ENCODE measurements at regions of chr16 and their contacts with region 1.

Region 1: DNA sequence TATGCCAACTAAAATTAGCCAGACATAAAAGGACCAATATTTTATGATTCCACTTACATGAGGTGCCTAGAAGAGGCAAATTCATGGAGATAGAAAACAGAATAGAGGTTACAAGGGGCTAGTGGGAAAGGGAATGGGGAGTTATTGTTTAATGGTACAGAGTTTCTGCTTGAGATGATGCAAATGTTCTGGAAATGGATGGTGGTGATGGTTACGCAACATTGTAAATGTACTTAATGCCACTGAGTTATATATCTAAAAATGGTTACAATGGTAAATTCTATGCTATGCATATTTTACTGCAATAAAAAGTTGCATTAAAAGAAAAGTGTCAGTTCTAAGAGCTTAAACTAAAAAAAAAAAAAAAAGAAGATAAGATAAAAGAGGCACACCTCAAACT is 17.9 kb downstream of the MT1X start:
- DNase-seq: no peak
- H3K4me3 ChIP-seq: no peak overlapping the region
- H3K27ac ChIP-seq: no peak overlapping the region
- H3K4me1 ChIP-seq: no peaks in the 10 kb centered on the region
- H3K27me3 ChIP-seq: no peaks in the 10 kb centered on the region

Region 2: DNA sequence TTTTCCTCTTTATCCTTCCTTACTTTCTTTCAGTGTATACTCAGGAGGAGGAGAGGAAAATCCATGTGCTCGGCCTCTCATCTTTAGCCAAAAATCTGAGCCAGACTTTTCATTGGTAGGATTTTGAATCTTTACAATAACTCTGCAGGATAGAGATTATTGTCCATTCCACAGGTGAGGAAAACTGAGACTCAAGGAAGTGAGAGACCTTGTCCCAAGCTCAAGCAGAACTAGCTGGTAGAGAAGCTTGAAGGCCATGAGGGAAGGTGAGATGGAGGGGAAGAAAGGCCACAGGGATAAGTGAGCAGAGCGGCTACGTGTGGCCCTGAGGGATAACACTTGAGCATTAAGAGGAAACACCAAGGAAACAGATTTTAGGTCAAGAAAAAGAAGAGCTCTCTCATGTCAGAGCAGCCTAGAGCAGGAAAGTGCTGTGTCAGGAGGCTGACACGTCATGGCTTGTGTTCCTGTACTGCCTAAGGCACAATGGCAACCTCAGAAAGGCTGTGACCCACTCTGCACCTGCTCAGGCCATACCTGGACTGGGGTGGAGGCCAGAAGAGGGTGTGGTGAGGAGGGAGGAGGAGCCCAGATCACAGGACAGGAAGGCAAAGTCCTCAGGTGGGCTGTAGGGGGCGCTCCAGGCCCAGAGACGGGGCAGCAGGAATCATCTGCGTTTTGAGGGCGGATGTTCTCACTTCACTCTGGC is 123.5 kb before region 1 on chr16:
- CTCF ChIA-PET with region 1: interaction called, 36 read pairs
- POLR2A ChIA-PET with region 1: no interaction called
- DNase-seq: peak; percentile 74 to 83 (median 81)
- H3K4me3 ChIP-seq: no peak overlapping the region
- H3K27ac ChIP-seq: no peak overlapping the region
- H3K4me1 ChIP-seq: peaks cover 0 to 3% (median 1%) of the 10 kb centered on the region in 4 experiments
- H3K27me3 ChIP-seq: peaks cover 0 to 2% (median 0%) of the 10 kb centered on the region in 5 experiments

Region 3: GRCh38 chr16:56600398-56600999 is 99.7 kb before region 1 on chr16:
- CTCF ChIA-PET with region 1: interaction called, 41 read pairs
- POLR2A ChIA-PET with region 1: interaction called, 5 read pairs
- DNase-seq: peak; percentile 57 to 80 (median 70)
- H3K4me3 ChIP-seq: no peak overlapping the region
- H3K27ac ChIP-seq: no peak overlapping the region
- H3K4me1 ChIP-seq: no peaks in the 10 kb centered on the region
- H3K27me3 ChIP-seq: peaks cover 0 to 13% (median 6%) of the 10 kb centered on the region in 5 experiments

Region 4: GRCh38 chr16:56673921-56674320 is 26.3 kb before region 1 on chr16:
- CTCF ChIA-PET with region 1: interaction called, 42 read pairs
- POLR2A ChIA-PET with region 1: no interaction called
- DNase-seq: peak; percentile 50 to 73 (median 71)
- H3K4me3 ChIP-seq: no peak overlapping the region
- H3K27ac ChIP-seq: no peak overlapping the region
- H3K4me1 ChIP-seq: peaks cover 0 to 19% (median 7%) of the 10 kb centered on the region in 4 experiments
- H3K27me3 ChIP-seq: peaks cover 8 to 82% (median 28%) of the 10 kb centered on the region in 5 experiments

Region 5: DNA sequence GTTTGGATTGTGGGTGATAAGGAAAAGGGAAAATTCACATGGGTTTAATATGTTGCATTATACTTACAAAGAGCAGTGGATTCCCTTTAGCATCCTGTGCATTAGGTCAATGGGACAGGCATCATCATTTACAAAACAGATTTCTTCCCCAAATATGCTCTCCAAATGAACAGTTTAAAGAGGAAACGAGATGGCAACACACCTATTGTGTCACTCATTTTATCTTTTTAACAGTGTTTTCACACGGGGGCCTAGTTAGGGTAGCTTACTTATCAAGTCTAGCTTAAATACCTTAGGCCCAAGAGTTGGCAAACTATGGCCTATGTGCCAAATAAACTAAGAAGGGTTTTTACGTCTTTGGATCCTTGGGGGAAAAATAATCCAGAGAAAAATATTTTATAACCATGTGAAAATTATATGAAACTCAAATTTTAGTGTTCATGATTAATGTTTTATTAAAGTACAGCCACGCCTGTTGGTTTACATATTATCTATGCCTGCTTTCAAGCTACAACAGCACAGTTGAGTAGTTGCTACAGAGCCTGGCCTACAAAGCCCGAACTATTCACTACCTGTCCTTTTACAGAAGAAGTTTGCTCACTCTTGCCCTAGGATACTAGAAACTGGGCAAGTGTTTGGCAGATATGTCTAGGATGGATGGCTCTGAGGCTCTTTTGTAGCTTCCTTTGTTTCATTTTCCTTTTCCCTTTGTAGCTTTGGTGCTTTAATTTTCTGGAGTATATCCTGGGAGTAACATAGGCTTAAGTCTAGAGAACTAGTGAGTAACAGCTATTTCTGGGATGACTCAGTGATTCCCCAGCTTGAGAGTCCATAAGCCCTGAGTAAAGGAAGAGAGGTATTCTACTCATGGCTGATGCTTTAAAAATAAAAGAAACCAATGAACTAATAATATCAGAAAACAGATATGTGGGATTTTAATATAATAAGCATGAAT is 42.1 kb after region 1 on chr16:
- CTCF ChIA-PET with region 1: no interaction called
- POLR2A ChIA-PET with region 1: no interaction called
- DNase-seq: no peak
- H3K4me3 ChIP-seq: no peak overlapping the region
- H3K27ac ChIP-seq: no peak overlapping the region
- H3K4me1 ChIP-seq: no peaks in the 10 kb centered on the region
- H3K27me3 ChIP-seq: no peaks in the 10 kb centered on the region

Measured in common myeloid progenitor, CD34-positive (primary cell).